ENCODE measurements at regions of chr9 and their contacts with region 1.

Region 1: DNA sequence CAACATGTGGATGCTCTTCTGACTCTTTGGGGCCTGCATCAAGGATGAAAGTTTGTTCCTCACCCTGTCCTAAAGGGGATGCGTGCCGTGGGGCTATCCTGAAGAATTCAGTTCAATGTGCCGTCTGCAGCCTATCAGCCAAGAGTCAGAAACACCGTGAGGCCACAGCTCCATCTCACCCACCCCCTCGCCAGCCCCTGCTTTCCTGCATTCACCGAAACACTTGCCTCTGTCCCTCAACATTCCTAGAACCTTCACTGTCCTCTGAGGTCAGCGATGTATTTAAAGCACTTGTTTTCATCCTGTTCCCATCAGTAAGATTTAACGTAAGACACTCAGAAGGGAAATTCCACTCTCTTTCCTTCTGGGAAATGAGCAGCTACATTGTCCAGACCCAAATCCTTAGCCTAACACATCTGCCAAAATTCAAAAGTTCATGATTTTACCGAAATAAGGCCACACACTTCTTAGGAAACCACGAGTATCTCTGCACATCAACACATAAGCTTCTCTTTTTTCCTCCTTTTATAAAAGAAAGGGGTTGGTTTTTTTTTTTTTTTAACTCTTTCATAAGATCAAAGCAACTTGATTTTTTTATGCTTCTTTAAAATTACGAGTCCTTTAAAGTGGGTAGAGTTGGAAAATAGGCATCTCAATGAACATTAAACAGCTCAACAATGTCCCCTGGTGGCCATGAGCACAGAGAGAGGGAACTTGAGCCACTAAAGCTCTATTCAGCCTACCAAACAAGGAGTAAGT is 100.7 kb downstream of the SUSD1 start:
- DNase-seq: peak; percentile 99
- H3K4me3 ChIP-seq: no peak overlapping the region; the same call in 1 of the 2 replicates
- CTCF ChIP-seq: peak; percentile 85

Region 2: GRCh38 chr9:111362526-111362925 is 711.9 kb before region 1 on chr9:
- CTCF ChIA-PET with region 1: no interaction called
- POLR2A ChIA-PET with region 1: no interaction called
- DNase-seq: no peak
- H3K4me3 ChIP-seq: no peak overlapping the region
- CTCF ChIP-seq: no peak

Region 3: DNA sequence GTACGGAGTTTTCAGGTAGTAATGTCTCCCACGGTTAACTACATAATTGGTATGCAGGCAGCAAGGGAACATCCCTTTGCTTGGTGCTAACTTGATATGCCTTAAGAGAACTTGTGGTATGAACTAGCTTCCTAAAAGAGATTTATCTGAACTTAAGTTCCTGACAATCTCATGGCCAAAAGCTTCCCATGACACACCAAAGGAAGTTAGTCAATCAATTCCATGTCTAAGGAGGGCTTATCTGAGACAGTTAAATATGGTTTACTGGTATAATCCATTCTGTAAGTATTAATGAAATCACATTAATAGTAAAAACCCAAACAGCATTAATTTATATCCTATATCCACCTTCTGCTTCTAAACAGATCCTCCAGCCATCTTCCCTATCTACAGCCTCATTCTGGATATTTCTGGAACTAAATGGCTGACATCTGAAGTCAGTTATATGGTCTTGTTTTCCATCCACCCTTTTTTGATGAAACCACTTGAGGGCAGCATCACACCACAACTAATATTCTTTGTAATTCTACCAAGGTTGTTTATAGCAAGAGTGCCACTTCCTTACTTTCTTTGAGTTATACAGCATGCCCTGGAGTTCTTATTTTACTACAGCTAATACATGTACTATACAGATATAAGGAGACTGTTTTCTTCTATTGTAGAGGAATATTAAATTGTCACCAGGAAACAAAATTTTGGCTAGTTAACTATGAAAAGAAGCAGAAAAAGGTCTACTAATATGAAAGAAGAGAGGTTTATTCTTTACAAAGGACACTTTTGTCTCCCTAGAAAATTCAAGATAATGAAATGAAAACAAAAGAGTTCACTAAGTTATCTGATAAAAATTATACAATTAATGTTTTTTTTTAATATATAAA is 314.4 kb before region 1 on chr9:
- CTCF ChIA-PET with region 1: interaction called, 136 read pairs
- POLR2A ChIA-PET with region 1: interaction called, 5 read pairs
- DNase-seq: peak; percentile 65
- H3K4me3 ChIP-seq: no peak overlapping the region
- CTCF ChIP-seq: peak; percentile 47

Region 4: DNA sequence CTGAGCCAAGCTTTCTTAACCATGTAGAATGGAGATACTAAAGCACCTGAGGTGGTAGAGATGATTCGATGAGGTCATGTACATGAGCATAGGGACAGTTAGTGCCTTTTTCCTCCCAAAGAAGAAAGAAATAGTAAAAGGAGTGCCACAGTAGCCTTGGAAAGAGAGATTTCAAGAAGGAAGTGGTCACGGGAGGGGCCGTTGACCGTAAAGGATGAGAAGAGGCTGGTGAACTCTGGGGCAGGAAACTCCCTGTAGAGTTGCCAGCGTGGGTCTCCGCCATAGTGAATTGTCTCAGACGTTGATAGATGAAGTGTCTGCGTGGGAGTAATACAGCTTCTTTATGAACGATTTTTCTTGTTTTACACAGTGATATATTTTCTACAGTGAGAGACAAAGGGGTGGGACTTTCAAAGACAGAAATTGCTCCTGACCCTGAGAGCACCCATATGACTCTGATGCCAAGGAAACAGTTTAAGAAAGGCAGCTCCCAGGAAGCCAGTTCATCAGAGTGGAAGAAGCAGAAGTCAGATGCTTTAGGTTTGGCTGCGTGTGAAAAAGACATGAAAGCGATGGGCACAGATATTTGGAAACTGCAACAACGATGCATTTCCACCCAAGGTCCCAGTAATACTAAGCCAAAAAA is 136.5 kb before region 1 on chr9:
- CTCF ChIA-PET with region 1: interaction called, 11 read pairs
- POLR2A ChIA-PET with region 1: interaction called, 3 read pairs
- DNase-seq: no peak
- H3K4me3 ChIP-seq: no peak overlapping the region
- CTCF ChIP-seq: no peak

Region 5: GRCh38 chr9:111957856-111958652 is 116.4 kb before region 1 on chr9:
- CTCF ChIA-PET with region 1: interaction called, 11 read pairs
- POLR2A ChIA-PET with region 1: interaction called, 16 read pairs
- DNase-seq: peak; percentile 99
- H3K4me3 ChIP-seq: peak overlapping the region; percentile 47
- CTCF ChIP-seq: no peak

Region 6: DNA sequence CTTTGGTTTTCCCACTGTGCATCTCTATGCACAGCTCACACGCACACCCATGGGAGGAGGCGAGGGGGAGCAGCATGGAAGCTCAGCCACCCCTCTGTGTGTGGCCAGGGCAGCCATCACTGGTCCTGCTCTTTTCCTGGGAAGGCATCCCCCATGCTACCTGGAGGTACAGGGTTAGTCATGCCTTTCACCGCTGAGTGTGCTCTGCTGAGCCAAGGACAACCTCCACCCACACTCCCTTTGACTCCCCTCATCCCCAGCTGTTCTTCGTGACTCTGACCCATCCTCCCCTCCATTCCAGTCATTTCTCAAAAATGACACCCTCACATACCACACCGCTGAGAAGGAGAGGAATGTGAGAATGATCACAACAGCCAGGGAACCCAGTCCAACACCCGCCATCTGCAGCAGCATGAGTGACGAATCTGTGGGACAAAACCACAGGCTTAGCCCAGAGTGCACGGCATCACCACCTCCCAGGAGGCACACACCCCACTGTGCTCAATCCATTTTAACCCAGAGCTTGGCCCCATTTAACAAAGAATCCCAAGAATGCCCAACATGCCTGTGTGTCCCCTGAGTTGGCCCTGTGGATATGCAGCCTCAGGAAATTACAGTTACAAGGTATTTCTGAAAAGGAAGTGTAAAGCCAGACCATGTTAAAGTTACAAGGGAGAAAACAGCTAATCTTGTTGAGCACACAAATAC is 32.7 kb before region 1 on chr9:
- CTCF ChIA-PET with region 1: interaction called, 9 read pairs
- POLR2A ChIA-PET with region 1: interaction called, 26 read pairs
- DNase-seq: peak; percentile 100
- H3K4me3 ChIP-seq: no peak overlapping the region
- CTCF ChIP-seq: no peak

Region 7: DNA sequence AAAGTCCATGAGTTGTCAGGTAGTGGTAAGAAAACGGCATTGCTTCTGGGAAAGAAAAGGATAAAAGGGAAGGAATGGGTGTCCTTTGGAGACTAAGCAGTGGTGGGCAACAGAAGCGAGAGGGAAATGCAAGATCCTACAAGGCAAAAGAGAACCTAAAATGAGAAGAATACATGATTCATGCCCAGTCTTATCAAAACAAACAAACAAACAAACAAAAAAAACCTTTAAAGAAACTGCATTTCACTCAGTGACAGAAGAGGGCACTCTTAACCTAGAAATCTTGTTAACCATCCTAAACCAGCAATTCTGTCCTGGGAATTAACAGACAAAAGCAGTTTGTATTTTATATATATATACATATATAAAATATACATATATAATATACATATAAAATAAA is 12.2 kb after region 1 on chr9:
- CTCF ChIA-PET with region 1: interaction called, 39 read pairs
- POLR2A ChIA-PET with region 1: no interaction called
- DNase-seq: no peak
- H3K4me3 ChIP-seq: no peak overlapping the region
- CTCF ChIP-seq: peak; percentile 34

Measured in AG04449 (cell line).